ENCODE measurements at regions of chr12 and their contacts with region 1.

Region 1: DNA sequence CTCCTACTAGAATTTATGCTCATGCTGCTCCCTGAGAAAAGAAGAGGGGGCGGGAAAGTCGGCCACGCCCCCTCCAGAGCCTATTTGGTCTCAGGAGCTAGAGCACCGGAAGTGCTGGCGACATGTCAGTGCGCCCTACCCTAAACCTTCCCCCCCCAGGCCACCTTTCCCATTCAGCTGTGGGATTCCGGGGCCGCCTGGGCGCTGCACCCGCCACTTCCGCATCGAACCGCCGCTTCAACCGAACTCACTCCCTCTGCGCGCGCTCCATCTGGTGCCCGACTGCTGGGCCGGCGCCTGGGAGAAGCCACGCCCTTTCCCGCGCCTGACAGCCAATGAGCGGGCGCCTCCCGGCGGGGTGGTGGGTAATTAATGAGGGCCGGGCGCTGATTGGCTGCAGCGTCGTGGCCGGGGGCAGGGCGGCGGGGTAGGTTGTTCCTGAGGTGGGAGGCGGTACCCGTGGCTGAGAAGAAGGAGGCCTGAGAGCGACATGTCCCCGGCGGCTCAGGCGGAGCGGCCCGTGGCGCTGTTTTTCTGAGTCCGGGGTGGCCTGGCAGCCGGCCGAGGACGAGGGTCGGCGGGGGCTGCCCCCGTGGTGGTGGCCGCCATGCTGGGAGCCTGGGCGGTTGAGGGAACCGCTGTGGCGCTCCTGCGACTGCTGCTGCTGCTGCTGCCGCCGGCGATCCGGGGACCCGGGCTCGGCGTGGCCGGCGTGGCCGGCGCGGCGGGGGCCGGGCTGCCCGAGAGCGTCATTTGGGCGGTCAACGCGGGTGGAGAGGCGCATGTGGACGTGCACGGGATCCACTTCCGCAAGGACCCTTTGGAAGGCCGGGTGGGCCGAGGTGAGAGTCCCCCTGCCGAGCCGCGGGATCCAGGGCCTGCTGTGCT is at the start of gene MLEC:
- DNase-seq: peak; percentile 92 to 99
- H3K4me3 ChIP-seq: peak within 1 kb of the TSS; percentile 75 to 99
- H3K27ac ChIP-seq: peak within 1 kb of the TSS; percentile 87 to 89
- H3K4me1 ChIP-seq: peaks cover 7 to 28% of the 10 kb centered on the region in 2 donors
- H3K27me3 ChIP-seq: no peaks in the 10 kb centered on the region
- CTCF ChIP-seq: peak in 2 of 3 experiments; percentile 1 to 21
- total RNA-seq, gene MLEC: 47.5 TPM

Region 2: DNA sequence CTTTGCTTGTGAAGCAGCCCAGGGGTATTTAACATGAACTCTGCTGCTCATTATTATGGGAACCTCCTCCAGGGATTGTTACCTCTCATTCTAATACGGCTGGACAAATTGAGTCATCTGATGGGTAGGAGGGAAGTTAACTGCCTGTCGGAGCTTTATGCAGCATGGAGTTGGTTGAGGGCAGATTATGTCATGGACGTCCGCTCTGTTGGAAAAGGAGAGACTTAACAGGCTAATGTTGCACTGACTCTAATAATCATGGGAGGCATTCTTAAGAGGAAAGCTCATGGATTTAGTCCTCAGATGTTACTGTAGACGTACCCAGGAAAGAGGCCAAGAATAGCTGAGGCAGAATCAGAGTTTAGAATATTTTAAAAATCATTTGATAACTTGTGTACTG is 115.6 kb before region 1 on chr12:
- intact Hi-C with region 1: no loop called
- DNase-seq: no peak
- H3K4me3 ChIP-seq: no peak overlapping the region
- H3K27ac ChIP-seq: no peak overlapping the region
- H3K4me1 ChIP-seq: no peaks in the 10 kb centered on the region
- H3K27me3 ChIP-seq: no peaks in the 10 kb centered on the region
- CTCF ChIP-seq: no peak

Region 3: DNA sequence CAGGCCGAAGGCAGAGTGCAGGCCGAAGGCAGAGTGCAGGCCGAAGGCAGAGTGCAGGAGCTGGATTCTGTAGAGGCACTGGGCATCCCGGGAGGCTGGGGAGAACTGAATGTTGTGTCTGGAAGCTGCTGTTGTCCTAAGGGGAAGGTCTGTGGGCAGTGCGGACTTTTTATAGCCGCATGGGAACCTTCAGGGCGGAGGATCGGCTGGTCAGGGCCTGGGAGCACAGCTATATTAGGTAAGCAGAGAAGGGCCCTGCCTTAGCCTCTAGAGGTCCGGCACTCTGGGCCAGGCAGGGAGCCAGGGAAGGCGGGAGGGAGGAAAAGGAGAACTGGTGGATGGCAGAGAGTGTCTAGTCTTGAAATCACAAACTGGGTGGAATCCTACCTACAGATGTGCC is 32.3 kb before region 1 on chr12:
- intact Hi-C with region 1: loop called (anchors 1 kb)
- DNase-seq: peak in 1 of 2 donors; percentile 86
- H3K4me3 ChIP-seq: no peak overlapping the region
- H3K27ac ChIP-seq: peak overlapping the region; percentile 81 to 89
- H3K4me1 ChIP-seq: peaks cover 11 to 28% of the 10 kb centered on the region in 2 donors
- H3K27me3 ChIP-seq: no peaks in the 10 kb centered on the region
- CTCF ChIP-seq: no peak

Region 4: GRCh38 chr12:120666571-120667390 is 20.2 kb before region 1 on chr12:
- intact Hi-C with region 1: no loop called
- DNase-seq: no peak
- H3K4me3 ChIP-seq: no peak overlapping the region
- H3K27ac ChIP-seq: no peak overlapping the region
- H3K4me1 ChIP-seq: peaks cover 0 to 5% of the 10 kb centered on the region in 2 donors
- H3K27me3 ChIP-seq: no peaks in the 10 kb centered on the region
- CTCF ChIP-seq: no peak

Region 5: DNA sequence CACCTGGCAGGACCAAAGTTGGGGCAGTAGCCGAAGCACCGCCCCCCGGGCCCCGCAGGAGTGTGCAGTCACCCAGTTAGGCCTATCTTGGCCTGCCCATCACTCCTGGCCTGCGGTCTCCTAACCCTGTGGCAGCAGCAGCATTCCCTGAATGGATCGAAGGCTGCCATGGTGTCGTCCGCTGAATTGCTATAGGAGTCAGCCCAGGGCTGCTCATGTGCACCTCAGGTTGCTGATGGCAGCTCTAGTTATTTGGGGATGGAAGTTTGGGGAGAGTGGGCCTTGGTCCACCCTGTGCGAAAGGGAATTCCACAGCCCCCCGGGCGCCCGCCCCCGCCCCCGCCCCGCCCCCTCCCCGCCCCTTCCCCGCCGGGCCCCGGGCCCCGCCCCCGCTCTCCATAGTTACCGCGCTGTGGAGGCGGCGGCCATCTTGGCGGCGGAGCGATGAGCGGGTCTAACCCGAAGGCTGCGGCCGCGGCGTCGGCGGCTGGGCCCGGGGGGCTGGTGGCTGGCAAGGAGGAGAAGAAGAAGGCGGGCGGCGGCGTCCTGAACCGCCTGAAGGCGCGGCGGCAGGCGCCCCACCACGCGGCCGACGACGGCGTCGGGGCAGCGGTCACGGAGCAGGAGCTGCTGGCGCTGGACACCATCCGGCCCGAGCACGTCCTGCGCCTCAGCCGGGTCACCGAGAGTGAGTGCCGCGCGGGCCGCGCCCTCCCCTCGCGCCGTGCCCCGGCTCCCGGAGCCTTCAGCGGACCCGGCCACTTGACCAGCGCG is 23.3 kb after region 1 on chr12 and contains the start of gene UNC119B:
- intact Hi-C with region 1: loop called (anchors 1 kb)
- DNase-seq: peak in 1 of 2 donors; percentile 74
- H3K4me3 ChIP-seq: peak within 1 kb of the TSS; percentile 72 to 82
- H3K27ac ChIP-seq: peak within 1 kb of the TSS; percentile 72 to 86
- H3K4me1 ChIP-seq: peaks cover 0 to 9% of the 10 kb centered on the region in 2 donors
- H3K27me3 ChIP-seq: no peaks in the 10 kb centered on the region
- CTCF ChIP-seq: no peak
- total RNA-seq, gene UNC119B: 26.8 TPM

Region 6: DNA sequence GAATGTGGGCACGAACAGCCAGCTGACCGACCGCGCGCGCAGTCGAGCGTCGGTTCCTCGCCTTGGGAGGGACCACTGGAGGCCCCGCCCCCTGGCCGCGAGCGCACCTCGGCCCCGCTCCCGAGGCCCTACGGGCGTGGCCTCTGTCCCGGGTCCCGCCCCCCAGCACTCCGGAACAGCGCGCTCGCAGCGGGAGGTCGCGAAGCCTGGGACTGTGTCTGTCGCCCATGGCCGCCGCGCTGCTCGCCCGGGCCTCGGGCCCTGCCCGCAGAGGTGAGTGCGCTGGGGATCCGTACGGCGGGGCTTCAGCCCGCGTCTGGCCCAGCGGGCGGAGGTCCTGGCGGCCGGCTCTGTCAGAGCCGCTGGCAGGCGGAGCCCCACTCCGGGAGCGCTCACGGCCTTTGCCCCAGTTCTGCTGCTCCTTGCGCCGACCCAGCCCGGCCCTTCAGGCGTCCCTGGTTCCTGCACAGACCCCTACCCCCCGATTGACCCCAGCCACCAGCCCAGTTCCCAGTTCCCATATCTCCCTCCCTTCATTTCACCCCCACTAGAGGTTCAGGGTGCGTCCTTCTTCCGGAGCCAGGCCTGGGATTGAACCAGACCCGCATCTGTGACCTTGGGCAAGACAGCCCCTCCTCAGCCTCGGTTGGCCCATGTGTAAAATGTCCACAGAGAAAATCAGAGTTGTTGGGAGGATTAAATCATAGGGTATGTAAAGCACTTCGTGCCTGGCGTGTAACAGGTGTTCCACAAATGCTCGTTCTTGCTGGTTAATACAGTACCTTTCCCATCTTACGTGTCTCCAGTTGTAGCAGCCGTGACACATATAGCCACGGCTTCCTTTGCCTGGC is 39.0 kb after region 1 on chr12 and contains the start of gene ACADS:
- intact Hi-C with region 1: loop called (anchors 1 kb)
- DNase-seq: peak; percentile 40 to 93
- H3K4me3 ChIP-seq: peak within 1 kb of the TSS; percentile 75 to 91
- H3K27ac ChIP-seq: peak within 1 kb of the TSS; percentile 83 to 85
- H3K4me1 ChIP-seq: peaks cover 0 to 8% of the 10 kb centered on the region in 2 donors
- H3K27me3 ChIP-seq: no peaks in the 10 kb centered on the region
- CTCF ChIP-seq: no peak
- total RNA-seq, gene ACADS: 58.5 TPM

Region 7: DNA sequence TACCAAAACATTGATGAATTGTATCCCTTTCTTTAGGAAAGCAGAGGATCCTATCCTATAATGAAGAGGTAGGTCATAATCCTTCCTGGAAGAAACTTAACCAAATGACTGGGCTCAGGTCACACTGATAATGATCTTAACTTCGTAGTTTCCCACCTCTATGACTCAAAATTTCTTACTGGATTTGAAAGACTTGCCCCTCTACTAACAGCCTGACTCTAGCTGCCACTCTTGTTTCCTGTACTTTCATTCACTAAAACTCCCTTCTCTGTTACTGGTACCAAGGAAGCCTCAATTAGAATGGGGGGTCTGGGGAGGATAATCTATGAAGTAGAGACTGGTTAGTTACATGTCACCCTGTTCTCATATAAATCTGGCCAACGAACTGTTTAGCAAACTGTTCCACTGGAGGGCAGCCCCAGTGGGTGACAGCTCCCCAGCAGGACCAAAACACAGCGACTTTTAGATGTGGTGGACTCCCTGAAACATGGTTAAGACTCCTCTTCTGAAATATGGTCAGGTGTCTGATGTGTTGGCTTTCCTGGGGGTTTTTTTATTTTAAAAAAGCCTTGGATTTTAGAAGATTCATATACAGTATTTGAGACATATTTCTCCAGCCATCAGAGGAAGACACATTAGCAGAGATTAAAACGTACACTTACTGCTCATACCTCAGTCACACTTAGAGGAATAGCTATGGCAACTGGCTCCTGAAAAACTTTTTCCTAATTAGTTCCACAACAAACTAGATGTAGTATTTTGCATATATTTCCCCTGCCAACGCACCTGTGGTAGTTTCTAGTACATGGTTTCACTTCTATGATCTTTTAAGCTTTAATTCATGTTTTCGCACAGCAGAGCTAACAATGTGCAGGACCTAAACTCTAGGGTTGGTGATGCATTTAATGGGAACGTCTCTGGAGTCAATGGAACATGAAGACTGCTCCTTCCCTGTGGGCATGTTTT is 111.0 kb after region 1 on chr12:
- intact Hi-C with region 1: no loop called
- DNase-seq: no peak
- H3K4me3 ChIP-seq: no peak overlapping the region
- H3K27ac ChIP-seq: no peak overlapping the region
- H3K4me1 ChIP-seq: no peaks in the 10 kb centered on the region
- H3K27me3 ChIP-seq: no peaks in the 10 kb centered on the region
- CTCF ChIP-seq: no peak

Region 8: DNA sequence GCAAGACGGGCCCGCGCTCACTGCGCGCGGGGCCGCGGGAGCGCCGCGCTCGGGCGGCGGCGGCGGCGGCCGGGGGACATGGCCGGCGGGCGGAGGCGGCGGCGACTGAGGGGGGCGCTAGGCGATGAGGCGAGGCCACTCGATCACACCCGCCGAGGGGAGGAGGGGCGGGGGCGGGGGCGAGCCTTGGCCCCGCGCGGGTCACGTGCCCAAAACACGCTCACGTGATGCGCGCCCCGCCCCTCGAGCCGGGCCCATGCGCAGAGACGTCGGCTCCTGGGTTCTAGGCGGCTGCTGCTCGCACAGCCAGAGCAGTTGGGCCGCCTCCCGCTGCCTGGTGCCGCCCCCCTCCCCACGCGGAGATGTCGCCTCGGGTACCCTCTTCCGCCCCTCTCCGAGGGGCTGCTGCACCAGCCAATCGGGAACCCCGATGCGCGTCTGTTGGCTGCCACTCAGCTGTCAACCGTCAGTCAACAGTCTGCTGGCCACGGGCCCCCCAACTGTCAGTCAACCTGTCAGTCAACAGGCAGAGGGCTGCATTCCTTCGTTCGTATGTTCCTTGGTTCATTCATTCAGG is 217.4 kb after region 1 on chr12 and contains the start of gene SPPL3:
- intact Hi-C with region 1: loop called (anchors 2 kb)
- DNase-seq: peak; percentile 62 to 94
- H3K4me3 ChIP-seq: peak within 1 kb of the TSS; percentile 91 to 97
- H3K27ac ChIP-seq: peak within 1 kb of the TSS; percentile 83 to 93
- H3K4me1 ChIP-seq: peaks cover 12 to 30% of the 10 kb centered on the region in 2 donors
- H3K27me3 ChIP-seq: no peaks in the 10 kb centered on the region
- CTCF ChIP-seq: no peak
- total RNA-seq, gene SPPL3: 20.4 TPM

Region 9: GRCh38 chr12:121038861-121039666 is 352.1 kb after region 1 on chr12 and contains the start of gene OASL:
- intact Hi-C with region 1: no loop called
- DNase-seq: peak in 1 of 2 donors; percentile 65
- H3K4me3 ChIP-seq: peak within 1 kb of the TSS; percentile 43 to 57
- H3K27ac ChIP-seq: peak within 1 kb of the TSS in 1 of 2 donors; percentile 48
- H3K4me1 ChIP-seq: no peaks in the 10 kb centered on the region
- H3K27me3 ChIP-seq: no peaks in the 10 kb centered on the region
- CTCF ChIP-seq: no peak
- total RNA-seq, gene OASL: not detected

Measured in ascending aorta (tissue), 2 donors.